Common myeloid progenitor, CD34-positive (primary cell): ENCODE measurements at regions of chr10 and their contacts with region 1.

Region 1: GRCh38 chr10:13440185-13441061 is 88.4 kb downstream of the BEND7 start:
- DNase-seq: peak; percentile 39 to 75 (median 74)
- H3K4me3 ChIP-seq: peak overlapping the region in 6 of 7 experiments; percentile 19 to 73 (median 52)
- H3K27ac ChIP-seq: no peak overlapping the region
- H3K4me1 ChIP-seq: peaks cover 0 to 12% (median 11%) of the 10 kb centered on the region in 4 experiments
- H3K27me3 ChIP-seq: peaks cover 0 to 24% (median 20%) of the 10 kb centered on the region in 5 experiments

Region 2: GRCh38 chr10:13206546-13207443 is 233.6 kb before region 1 on chr10:
- CTCF ChIA-PET with region 1: no interaction called
- POLR2A ChIA-PET with region 1: no interaction called
- DNase-seq: peak; percentile 60 to 77 (median 69)
- H3K4me3 ChIP-seq: no peak overlapping the region
- H3K27ac ChIP-seq: no peak overlapping the region
- H3K4me1 ChIP-seq: no peaks in the 10 kb centered on the region
- H3K27me3 ChIP-seq: no peaks in the 10 kb centered on the region

Region 3: GRCh38 chr10:13257621-13258140 is 182.7 kb before region 1 on chr10:
- CTCF ChIA-PET with region 1: no interaction called
- POLR2A ChIA-PET with region 1: no interaction called
- DNase-seq: no peak
- H3K4me3 ChIP-seq: no peak overlapping the region
- H3K27ac ChIP-seq: no peak overlapping the region
- H3K4me1 ChIP-seq: no peaks in the 10 kb centered on the region
- H3K27me3 ChIP-seq: no peaks in the 10 kb centered on the region

Region 4: GRCh38 chr10:13365243-13365642 is 75.2 kb before region 1 on chr10:
- CTCF ChIA-PET with region 1: interaction called, 107 read pairs
- POLR2A ChIA-PET with region 1: no interaction called
- DNase-seq: no peak
- H3K4me3 ChIP-seq: no peak overlapping the region
- H3K27ac ChIP-seq: no peak overlapping the region
- H3K4me1 ChIP-seq: no peaks in the 10 kb centered on the region
- H3K27me3 ChIP-seq: peaks cover 0 to 2% (median 0%) of the 10 kb centered on the region in 5 experiments

Region 5: DNA sequence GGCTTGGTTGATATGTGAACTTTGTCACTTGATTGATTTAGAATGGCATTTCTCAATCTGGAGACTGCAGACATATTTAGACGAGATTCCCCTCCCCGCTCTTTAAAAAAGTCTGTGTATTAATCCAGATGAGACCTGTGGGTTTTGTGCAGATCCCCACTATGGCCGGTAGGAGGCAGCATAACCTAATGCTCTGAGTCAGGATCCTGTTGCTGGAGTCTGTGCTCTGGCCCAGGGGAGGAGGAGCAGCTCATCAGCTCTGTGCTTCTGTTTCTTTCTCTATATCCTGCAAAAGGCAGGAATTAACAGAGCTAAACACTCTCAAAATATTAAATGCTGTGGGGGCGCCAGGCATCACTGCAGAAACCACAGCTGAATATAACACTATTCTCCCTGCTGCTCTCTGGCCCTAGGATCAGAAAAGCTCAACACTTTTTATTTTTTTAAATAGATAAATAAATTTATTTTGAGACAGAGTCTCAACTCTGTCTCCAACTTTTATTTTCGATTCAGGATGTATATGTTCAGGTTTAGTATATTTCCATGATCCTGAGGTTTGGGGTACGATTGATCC is 68.4 kb before region 1 on chr10:
- CTCF ChIA-PET with region 1: interaction called, 107 read pairs
- POLR2A ChIA-PET with region 1: no interaction called
- DNase-seq: peak; percentile 87 to 95 (median 92)
- H3K4me3 ChIP-seq: no peak overlapping the region
- H3K27ac ChIP-seq: no peak overlapping the region
- H3K4me1 ChIP-seq: no peaks in the 10 kb centered on the region
- H3K27me3 ChIP-seq: no peaks in the 10 kb centered on the region

Region 6: GRCh38 chr10:13382703-13383398 is 57.6 kb before region 1 on chr10:
- CTCF ChIA-PET with region 1: interaction called, 107 read pairs
- POLR2A ChIA-PET with region 1: no interaction called
- DNase-seq: peak in 2 of 3 donors; percentile 63 to 71
- H3K4me3 ChIP-seq: peak overlapping the region in 6 of 7 experiments; percentile 46 to 77 (median 58)
- H3K27ac ChIP-seq: no peak overlapping the region
- H3K4me1 ChIP-seq: peaks cover 0 to 12% (median 8%) of the 10 kb centered on the region in 4 experiments
- H3K27me3 ChIP-seq: peaks cover 0 to 26% (median 0%) of the 10 kb centered on the region in 5 experiments

Region 7: GRCh38 chr10:13536674-13537366 is 96.4 kb after region 1 on chr10:
- CTCF ChIA-PET with region 1: interaction called, 10 read pairs
- POLR2A ChIA-PET with region 1: no interaction called
- DNase-seq: peak; percentile 57 to 71 (median 63)
- H3K4me3 ChIP-seq: peak overlapping the region in 2 of 7 experiments; percentile 35 to 64
- H3K27ac ChIP-seq: no peak overlapping the region
- H3K4me1 ChIP-seq: peaks cover 0 to 3% (median 2%) of the 10 kb centered on the region in 4 experiments
- H3K27me3 ChIP-seq: peaks cover 0 to 6% (median 0%) of the 10 kb centered on the region in 5 experiments

Region 8: DNA sequence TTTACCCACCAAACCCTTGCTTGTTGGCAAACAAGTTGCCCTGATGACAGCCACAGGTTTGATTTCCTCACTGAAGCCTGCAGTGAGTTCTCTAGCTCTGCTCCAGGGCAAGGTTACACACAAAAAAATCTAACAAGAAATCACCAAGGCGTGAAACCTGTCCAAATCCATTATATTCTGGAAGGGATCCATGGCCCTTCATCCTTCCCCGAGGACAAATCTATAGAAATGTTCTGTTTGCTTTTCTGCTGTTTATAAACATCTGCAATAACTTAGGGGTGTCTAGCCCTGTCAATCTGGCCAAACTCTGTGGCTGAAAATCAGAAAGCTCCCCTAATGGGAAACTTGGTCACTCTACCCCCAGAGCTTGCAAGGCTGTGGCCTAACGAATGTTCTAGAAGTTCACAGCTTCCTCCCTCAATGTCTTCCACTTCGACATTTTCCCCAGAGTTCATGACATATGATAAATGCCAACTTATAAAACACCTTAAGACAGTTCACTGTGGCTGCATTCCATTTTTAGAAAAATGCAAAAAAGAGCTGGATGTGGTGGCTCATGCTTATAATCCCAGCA is 310.9 kb after region 1 on chr10:
- CTCF ChIA-PET with region 1: no interaction called
- POLR2A ChIA-PET with region 1: no interaction called
- DNase-seq: no peak
- H3K4me3 ChIP-seq: no peak overlapping the region
- H3K27ac ChIP-seq: no peak overlapping the region
- H3K4me1 ChIP-seq: no peaks in the 10 kb centered on the region
- H3K27me3 ChIP-seq: no peaks in the 10 kb centered on the region